ENCODE measurements at regions of chr21 and their contacts with region 1.

Region 1: GRCh38 chr21:27423038-27423437 is 456.1 kb upstream of the ADAMTS5 start:
- DNase-seq: peak; percentile 50 to 85 (median 74)
- ATAC-seq: peak; percentile 75 to 95 (median 92)
- H3K4me3 ChIP-seq: no peak overlapping the region
- H3K27ac ChIP-seq: peak overlapping the region in 10 of 12 donors; percentile 15 to 52 (median 31)
- H3K4me1 ChIP-seq: peaks cover 0 to 50% (median 15%) of the 10 kb centered on the region in 12 donors
- H3K27me3 ChIP-seq: no peaks in the 10 kb centered on the region
- CTCF ChIP-seq: no peak
- POLR2A ChIP-seq: no peak

Region 2: GRCh38 chr21:26967062-26967913 is 455.8 kb before region 1 on chr21 and contains the start of gene ADAMTS5:
- intact Hi-C with region 1: loop called in 1 of 10 experiments (anchors 10 kb)
- DNase-seq: peak; percentile 45 to 72 (median 61)
- ATAC-seq: peak; percentile 28 to 68 (median 59)
- H3K4me3 ChIP-seq: peak within 1 kb of the TSS; percentile 35 to 74 (median 64)
- H3K27ac ChIP-seq: peak within 1 kb of the TSS; percentile 0 to 82 (median 69)
- H3K4me1 ChIP-seq: peaks cover 0 to 26% (median 11%) of the 10 kb centered on the region in 12 donors
- H3K27me3 ChIP-seq: peaks cover 0 to 50% (median 7%) of the 10 kb centered on the region in 9 donors
- CTCF ChIP-seq: no peak
- POLR2A ChIP-seq: peak in 1 of 2 donors; percentile 36
- total RNA-seq, gene ADAMTS5: 0.98 to 22.7 (median 3.6) TPM

Region 3: GRCh38 chr21:27246741-27247140 is 176.3 kb before region 1 on chr21:
- intact Hi-C with region 1: loop called in 1 of 10 experiments (anchors 10 kb)
- DNase-seq: no peak
- ATAC-seq: peak in 2 of 4 donors; percentile 42 to 67
- H3K4me3 ChIP-seq: no peak overlapping the region
- H3K27ac ChIP-seq: no peak overlapping the region
- H3K4me1 ChIP-seq: peaks cover 0 to 20% (median 0%) of the 10 kb centered on the region in 12 donors
- H3K27me3 ChIP-seq: no peaks in the 10 kb centered on the region
- CTCF ChIP-seq: no peak
- POLR2A ChIP-seq: no peak

Region 4: DNA sequence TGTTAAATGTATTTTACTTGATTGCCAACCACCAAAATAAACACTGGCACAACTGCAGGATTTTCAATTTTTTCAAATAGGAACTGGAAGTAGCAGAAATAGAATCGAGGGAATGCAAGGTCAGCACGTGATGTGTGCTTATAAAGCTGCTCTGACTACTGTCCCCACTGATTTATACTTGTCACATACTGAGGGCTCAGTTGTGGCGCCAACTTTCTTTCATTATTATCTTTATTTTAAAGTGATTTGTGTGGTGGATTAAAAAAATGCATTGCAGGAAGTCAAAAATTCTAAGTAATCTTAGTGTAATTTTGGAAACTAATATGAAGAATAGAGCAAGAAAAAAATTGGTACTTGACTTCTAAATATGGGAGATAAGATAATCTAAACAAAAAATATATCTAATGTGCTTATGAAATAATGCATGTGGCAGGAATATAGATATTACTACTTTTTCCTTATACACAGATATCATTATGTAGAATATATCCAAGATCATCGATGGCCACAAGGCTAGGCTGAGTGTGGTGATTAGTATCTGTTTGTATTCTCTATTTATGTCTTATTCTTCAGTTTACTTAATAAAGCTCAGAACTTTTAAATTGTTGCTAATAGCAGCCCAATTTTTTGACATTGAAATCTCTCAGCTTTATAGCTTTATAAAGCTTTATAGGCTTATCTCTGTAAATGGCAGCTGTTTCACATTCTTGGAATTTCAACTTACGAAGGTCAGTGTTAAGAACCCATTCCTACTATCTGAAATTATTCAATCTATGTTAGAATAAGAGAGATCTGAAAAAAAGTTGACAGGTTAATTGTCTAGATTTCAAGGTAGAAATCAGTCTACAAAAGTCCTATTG is 51.7 kb before region 1 on chr21:
- intact Hi-C with region 1: loop called in 1 of 10 experiments (anchors 10 kb)
- DNase-seq: no peak
- ATAC-seq: peak in 2 of 4 donors; percentile 44 to 60
- H3K4me3 ChIP-seq: no peak overlapping the region
- H3K27ac ChIP-seq: peak overlapping the region in 6 of 12 donors; percentile 0 to 45 (median 18)
- H3K4me1 ChIP-seq: peaks cover 0 to 36% (median 25%) of the 10 kb centered on the region in 12 donors
- H3K27me3 ChIP-seq: no peaks in the 10 kb centered on the region
- CTCF ChIP-seq: no peak
- POLR2A ChIP-seq: no peak